ENCODE measurements at regions of chr6 and their contacts with region 1.

Region 1: DNA sequence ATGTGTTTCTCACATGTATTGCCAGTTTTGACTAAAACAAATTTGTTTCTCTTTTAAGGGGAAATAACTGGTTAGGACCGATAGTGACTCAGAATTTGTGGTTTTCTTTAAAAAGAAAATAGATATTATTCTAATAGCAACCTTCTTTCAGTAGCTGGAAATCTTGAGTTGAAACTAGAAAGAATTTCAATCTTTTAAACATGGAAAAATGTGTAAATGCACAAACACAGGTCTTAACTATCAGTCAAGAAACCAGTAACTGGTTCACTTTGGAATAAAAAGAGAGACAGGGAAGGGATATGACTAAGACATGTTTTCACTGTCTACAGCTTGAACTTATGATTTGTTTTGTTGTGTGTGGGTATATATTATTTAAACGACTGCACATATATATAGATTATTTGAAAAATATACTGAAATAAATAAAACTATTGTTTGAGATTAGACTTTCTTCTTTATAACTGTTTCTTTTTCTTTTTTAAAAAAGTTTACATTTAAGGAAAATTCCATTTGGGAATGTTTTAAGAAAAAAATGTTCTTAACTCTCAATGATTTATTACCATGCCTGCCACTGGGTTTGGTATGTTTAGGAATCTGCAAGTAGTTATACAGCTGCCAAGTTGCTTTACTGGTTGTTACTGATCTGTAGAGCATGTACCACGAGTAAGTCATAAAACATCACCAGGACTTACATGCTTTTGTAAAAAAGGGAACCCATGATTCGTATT is 753.3 kb upstream of the MARCKS start:
- DNase-seq: no peak
- ATAC-seq: no peak

Region 2: DNA sequence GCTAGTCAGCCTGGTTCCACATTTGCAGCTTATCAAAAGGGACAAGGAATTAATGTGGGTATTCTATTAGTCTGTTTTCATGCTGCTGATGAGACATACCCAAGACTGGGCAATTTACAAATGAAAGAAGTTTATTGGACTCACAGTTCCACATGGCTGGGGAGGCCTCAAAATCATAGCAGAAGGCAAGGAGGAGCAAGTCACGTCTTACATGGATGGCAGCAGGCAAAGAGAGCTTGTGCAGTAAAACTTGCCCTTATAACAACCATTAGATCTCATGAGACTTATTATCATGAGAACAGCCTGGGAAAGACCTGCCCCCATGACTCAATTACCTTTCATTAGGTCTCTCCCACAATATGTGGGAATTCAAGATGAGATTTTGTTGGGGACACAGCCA is 64.3 kb after region 1 on chr6:
- intact Hi-C with region 1: no loop called
- DNase-seq: no peak
- ATAC-seq: no peak

Region 3: DNA sequence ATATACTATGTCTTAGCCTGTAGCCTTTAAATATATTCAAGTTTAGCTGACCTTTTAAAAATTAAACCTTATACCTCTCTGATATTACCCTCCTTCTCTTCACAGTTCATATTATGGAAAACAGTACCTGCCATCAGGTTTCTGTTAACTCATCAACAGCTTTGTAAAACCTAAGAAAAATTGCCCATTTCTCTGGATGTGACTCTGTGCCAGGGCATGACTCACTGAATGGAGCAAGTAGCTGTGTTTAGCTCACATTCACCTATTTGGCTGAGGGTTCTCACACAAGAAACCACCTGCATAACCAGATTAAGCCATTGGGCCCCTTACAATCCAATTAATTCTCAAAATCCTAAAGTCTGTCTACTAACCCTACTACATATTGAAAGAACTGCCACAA is 74.6 kb after region 1 on chr6:
- intact Hi-C with region 1: loop called (anchors 2 kb)
- DNase-seq: no peak
- ATAC-seq: no peak